Heart right ventricle (tissue), 16 donors: ENCODE measurements at regions of chr1 and their contacts with region 1.

Region 1: GRCh38 chr1:42766741-42767509 is at the starts of genes C1orf50 and P3H1:
- DNase-seq: peak; percentile 100
- ATAC-seq: peak; percentile 96 to 99 (median 98)
- H3K4me3 ChIP-seq: peak within 1 kb of the TSS; percentile 73 to 99 (median 93)
- H3K27ac ChIP-seq: peak within 1 kb of the TSS; percentile 67 to 98 (median 94)
- H3K4me1 ChIP-seq: peaks cover 7 to 53% (median 36%) of the 10 kb centered on the region in 9 donors
- H3K27me3 ChIP-seq: no peaks in the 10 kb centered on the region
- CTCF ChIP-seq: peak in 1 of 9 donors; percentile 11
- total RNA-seq, gene C1orf50: 4.9 to 10.7 (median 8.5) TPM
- total RNA-seq, gene P3H1: 5.0 to 18.3 (median 7.6) TPM

Region 2: DNA sequence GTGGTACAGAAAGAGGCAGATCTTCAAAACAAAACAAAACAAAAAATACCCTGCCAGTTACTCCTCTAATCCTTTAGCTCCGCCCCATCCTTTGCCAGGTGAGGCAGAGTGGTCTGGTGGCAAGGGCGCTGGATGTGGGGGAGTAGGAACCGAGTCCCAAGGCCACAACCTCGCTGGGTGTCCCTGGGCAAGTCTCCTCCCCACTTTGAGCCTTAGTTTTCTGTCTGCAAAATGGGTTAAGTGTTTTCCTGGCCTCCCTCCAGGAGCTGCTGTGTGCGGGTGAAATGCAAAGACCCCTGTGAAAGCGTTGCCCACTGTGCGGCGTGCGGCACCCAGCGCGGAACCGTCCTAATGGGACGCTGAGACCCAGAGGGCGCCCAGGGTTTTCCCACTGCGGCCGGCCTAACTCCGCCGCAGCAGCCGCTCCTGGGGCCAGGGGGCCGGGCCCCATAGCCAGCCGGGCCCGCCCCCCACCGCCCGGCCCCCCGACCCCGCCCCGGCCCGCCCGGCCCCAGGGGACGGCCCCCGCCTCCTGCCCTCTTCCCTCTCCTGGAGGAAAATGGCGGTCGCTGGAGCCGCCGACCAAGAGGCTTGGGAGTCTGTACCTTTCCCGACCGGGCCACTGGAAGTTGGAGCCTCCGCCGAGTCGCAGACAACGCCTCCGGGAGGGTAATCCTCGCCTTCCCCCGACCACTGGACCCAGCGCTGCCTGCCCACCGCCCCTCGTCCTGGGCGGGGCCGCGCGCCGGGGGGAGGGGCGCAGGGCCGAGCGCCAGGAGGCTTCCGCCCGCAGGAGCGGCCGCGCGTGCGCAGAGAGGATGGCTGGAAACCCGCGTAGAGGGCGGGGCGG is 49.9 kb after region 1 on chr1 and contains the starts of genes ERMAP and SVBP:
- intact Hi-C with region 1: loop called in 2 of 10 experiments (anchors 2 kb)
- DNase-seq: peak; percentile 92 to 97
- ATAC-seq: peak; percentile 97 to 99 (median 98)
- H3K4me3 ChIP-seq: peak within 1 kb of the TSS; percentile 29 to 92 (median 74)
- H3K27ac ChIP-seq: peak within 1 kb of the TSS; percentile 93 to 100 (median 99)
- H3K4me1 ChIP-seq: peaks cover 0 to 27% (median 23%) of the 10 kb centered on the region in 9 donors
- H3K27me3 ChIP-seq: no peaks in the 10 kb centered on the region
- CTCF ChIP-seq: peak in 1 of 9 donors; percentile 9
- total RNA-seq, gene ERMAP: 2.2 to 6.1 (median 5.0) TPM
- total RNA-seq, gene SVBP: 11.6 to 19.7 (median 13.8) TPM

Region 3: DNA sequence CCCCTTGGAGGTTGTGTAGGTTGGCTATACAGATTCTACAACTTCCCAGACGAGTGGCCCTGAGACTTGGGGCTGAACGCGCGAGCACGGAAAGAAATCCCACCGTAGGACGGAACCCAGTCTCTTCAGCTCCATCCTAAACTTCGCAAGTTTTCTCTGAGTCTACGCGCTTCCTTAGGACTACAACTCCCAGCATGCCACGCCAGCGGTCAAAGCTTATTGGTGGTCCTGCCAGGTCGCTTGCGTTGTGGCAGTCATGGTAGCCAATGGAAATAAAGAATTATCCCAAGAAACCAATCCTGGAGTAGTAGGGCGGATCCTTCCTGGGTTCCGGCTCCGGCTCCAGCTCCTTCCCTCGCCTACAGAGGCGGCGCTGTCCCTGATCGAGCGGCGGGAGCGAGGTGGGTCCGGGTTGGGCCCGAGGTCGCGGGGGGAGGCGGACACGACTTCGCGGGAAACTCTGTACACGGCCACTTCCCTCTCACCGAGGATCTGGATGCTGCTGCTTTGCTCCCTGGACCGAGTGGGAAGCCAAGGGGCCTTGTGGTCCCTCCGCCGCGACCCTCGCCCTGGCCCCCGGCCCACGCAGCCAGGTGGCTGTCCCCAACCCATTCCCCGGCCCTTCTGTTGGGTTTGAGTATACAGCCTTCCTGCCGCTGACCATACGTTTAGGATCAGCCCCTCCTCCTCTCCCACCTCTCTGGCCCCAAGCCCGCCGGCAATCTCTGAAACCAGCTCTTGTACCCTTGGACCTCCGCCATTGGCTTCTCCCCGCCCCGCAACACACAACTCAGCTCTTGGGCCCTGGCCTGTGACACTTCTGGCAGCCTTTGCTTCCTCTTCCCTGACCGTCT is 79.6 kb after region 1 on chr1 and contains the start of gene ZNF691:
- intact Hi-C with region 1: loop called in 2 of 10 experiments (anchors 1 to 2 kb)
- DNase-seq: peak; percentile 88 to 97
- ATAC-seq: peak; percentile 97 to 99 (median 99)
- H3K4me3 ChIP-seq: peak within 1 kb of the TSS; percentile 65 to 97 (median 87)
- H3K27ac ChIP-seq: peak within 1 kb of the TSS; percentile 8 to 97 (median 92)
- H3K4me1 ChIP-seq: peaks cover 5 to 29% (median 19%) of the 10 kb centered on the region in 9 donors
- H3K27me3 ChIP-seq: no peaks in the 10 kb centered on the region
- CTCF ChIP-seq: peak in 8 of 9 donors; percentile 37 to 76 (median 48)
- total RNA-seq, gene ZNF691: 6.0 to 9.2 (median 7.9) TPM

Region 4: GRCh38 chr1:42924082-42924850 is 157.3 kb after region 1 on chr1:
- intact Hi-C with region 1: loop called in 5 of 10 experiments (anchors 10 kb)
- DNase-seq: peak; percentile 95 to 96
- ATAC-seq: peak; percentile 98 to 100 (median 99)
- H3K4me3 ChIP-seq: peak overlapping the region; percentile 64 to 88 (median 76)
- H3K27ac ChIP-seq: peak overlapping the region; percentile 88 to 98 (median 94)
- H3K4me1 ChIP-seq: peaks cover 0 to 18% (median 9%) of the 10 kb centered on the region in 9 donors
- H3K27me3 ChIP-seq: no peaks in the 10 kb centered on the region
- CTCF ChIP-seq: peak in 4 of 9 donors; percentile 17 to 46 (median 28)

Region 5: DNA sequence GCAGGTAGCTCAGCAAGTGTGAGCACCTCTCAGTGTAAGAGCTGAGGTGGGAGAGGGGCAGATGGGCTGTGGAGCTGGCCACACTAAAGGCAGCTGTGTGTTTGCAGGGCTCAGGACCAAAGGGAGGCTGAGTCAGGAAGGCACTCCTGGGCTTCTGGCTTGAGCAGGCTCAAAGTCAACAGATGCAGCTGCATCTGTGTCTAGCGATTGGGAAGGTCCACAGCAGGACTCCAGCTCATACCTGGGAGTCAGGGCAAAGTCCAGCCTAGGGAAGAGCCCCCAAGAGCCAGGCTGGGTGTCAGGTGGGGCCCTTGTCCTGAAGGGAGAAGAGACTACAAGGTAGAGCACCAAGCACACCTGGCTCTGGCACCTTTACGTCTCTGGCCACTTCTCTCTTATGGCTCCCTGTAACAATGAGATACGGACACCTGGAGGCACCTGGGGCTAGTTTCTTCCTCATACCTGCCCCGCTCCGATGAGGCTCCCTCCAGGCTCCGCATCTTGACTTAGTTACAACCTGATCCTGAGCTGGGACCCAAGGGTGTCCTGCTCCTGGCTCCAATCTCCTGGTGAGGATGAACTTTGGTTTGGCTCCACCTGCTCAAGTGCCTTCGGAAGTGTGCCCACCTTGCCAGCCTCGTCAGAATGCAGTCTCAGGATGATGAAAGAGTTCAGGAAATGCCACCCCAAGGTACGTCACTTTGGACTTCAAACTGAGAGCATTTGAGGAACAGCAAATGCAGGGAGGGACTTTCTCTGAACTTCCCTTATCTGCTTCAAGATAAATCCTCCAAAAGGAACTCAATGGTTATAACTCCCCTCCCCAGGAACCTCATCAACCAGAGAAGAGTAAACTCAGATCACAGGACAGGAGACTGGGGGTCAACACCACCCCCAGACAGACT is 213.2 kb after region 1 on chr1:
- intact Hi-C with region 1: no loop called
- DNase-seq: no peak
- ATAC-seq: no peak
- H3K4me3 ChIP-seq: no peak overlapping the region
- H3K27ac ChIP-seq: no peak overlapping the region
- H3K4me1 ChIP-seq: peaks cover 0 to 7% (median 0%) of the 10 kb centered on the region in 9 donors
- H3K27me3 ChIP-seq: no peaks in the 10 kb centered on the region
- CTCF ChIP-seq: no peak